MCF 10A (cell line): ENCODE measurements at regions of chr6 and their contacts with region 1.

Region 1: DNA sequence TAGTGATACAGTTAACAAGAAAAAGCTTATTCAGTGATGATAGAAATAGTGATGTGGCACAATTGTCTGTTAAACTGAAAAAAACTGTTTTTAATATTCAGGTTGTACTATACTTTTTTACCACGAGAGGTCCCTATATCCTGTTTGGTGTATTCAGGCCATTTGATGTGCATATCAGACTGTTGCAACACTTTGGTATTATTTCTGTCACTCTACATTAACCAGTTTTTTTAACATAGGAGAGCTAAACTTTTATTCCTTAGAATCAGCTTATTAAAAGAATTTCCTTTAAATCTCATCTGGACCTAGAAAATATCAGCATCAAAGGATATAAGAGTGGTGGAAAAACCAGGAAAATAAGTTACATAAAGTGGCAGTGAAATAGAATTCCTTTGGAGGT is 36.8 kb downstream of the TSPYL4 start:
- DNase-seq: peak; percentile 62
- H3K4me3 Mint-ChIP-seq: no peak overlapping the region
- H3K27ac Mint-ChIP-seq: no peak overlapping the region
- H3K4me1 Mint-ChIP-seq: no peaks in the 10 kb centered on the region
- H3K27me3 Mint-ChIP-seq: no peaks in the 10 kb centered on the region
- CTCF ChIP-seq: peak; percentile 63

Region 2: DNA sequence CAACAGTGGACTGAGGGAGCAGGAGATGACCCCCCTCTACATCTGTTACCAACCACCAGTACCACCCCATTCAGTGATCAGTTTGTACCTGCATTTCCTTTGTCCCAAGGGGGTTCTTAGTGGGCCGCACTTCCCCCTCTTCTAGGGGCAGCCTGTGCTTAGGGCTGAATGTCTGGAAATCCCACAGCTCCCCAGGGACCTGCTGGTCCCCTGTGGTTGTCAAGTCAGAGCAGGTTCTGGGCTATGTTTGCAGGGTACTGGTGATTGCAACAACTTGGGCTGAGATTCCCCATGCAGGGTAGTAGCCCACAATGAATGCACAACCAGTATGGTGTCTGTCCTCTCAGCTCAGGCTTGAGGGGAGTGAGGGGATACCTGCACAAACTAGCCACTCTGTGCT is 51.5 kb before region 1 on chr6:
- CTCF ChIA-PET with region 1: no interaction called
- POLR2A ChIA-PET with region 1: no interaction called
- intact Hi-C with region 1: no loop called
- DNase-seq: no peak
- H3K4me3 Mint-ChIP-seq: no peak overlapping the region
- H3K27ac Mint-ChIP-seq: no peak overlapping the region
- H3K4me1 Mint-ChIP-seq: peaks cover under 1% of the 10 kb centered on the region
- H3K27me3 Mint-ChIP-seq: no peaks in the 10 kb centered on the region
- CTCF ChIP-seq: no peak

Region 3: GRCh38 chr6:116229287-116229913 is 12.3 kb after region 1 on chr6:
- CTCF ChIA-PET with region 1: interaction called, 22 read pairs
- POLR2A ChIA-PET with region 1: interaction called, 3 read pairs
- intact Hi-C with region 1: no loop called
- DNase-seq: peak; percentile 36
- H3K4me3 Mint-ChIP-seq: no peak overlapping the region
- H3K27ac Mint-ChIP-seq: no peak overlapping the region
- H3K4me1 Mint-ChIP-seq: no peaks in the 10 kb centered on the region
- H3K27me3 Mint-ChIP-seq: no peaks in the 10 kb centered on the region
- CTCF ChIP-seq: no peak

Region 4: DNA sequence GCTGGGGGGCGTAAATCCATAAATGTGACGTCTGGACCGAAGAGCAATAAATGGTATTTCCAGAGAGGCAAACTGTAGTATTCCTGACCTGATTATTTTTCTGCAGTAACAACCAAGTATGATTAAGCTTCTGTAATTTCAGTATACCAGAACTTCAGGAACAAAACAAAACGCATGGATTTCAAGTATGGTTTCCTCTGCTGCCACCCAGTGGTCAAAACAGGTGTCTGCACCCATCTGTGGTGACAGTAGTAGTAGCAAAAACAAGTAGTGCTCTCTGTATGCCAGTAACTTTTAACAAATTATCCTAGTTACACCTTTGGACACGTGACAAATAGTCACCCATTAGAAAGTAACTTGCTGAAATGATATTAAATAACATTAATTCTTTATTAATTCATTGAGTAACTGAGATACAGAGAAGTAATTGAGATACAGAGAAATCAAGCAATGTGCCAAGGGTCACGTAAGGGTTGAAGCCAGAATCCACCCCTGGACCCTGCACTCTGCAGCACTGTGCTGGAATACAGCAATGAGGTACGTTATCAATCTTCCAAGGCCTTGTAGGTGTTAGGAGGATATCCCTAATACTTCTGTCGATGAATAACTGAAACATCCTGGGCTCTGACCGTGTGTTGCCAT is 344.4 kb after region 1 on chr6:
- CTCF ChIA-PET with region 1: interaction called, 26 read pairs
- POLR2A ChIA-PET with region 1: no interaction called
- intact Hi-C with region 1: loop called (anchors 1 kb)
- DNase-seq: peak; percentile 75
- H3K4me3 Mint-ChIP-seq: no peak overlapping the region
- H3K27ac Mint-ChIP-seq: no peak overlapping the region
- H3K4me1 Mint-ChIP-seq: peaks cover 6% of the 10 kb centered on the region
- H3K27me3 Mint-ChIP-seq: no peaks in the 10 kb centered on the region
- CTCF ChIP-seq: peak; percentile 81

Region 5: GRCh38 chr6:116633685-116634084 is 416.6 kb after region 1 on chr6:
- CTCF ChIA-PET with region 1: no interaction called
- POLR2A ChIA-PET with region 1: no interaction called
- intact Hi-C with region 1: loop called (anchors 10 kb)
- DNase-seq: peak; percentile 19
- H3K4me3 Mint-ChIP-seq: no peak overlapping the region
- H3K27ac Mint-ChIP-seq: no peak overlapping the region
- H3K4me1 Mint-ChIP-seq: peaks cover 5% of the 10 kb centered on the region
- H3K27me3 Mint-ChIP-seq: no peaks in the 10 kb centered on the region
- CTCF ChIP-seq: peak; percentile 23